ENCODE measurements at regions of chr21 and their contacts with region 1.

Region 1: GRCh38 chr21:17903029-17903806 is 84.1 kb upstream of the C21orf91 start:
- DNase-seq: no peak
- H3K4me3 ChIP-seq: no peak overlapping the region
- H3K27ac ChIP-seq: no peak overlapping the region
- H3K4me1 ChIP-seq: peaks cover 0 to 8% (median 2%) of the 10 kb centered on the region in 4 donors
- H3K27me3 ChIP-seq: no peaks in the 10 kb centered on the region
- CTCF ChIP-seq: peak; percentile 27

Region 2: GRCh38 chr21:17414766-17415165 is 488.5 kb before region 1 on chr21:
- intact Hi-C with region 1: no loop called
- DNase-seq: no peak
- H3K4me3 ChIP-seq: no peak overlapping the region
- H3K27ac ChIP-seq: no peak overlapping the region
- H3K4me1 ChIP-seq: no peaks in the 10 kb centered on the region
- H3K27me3 ChIP-seq: no peaks in the 10 kb centered on the region
- CTCF ChIP-seq: no peak

Region 3: DNA sequence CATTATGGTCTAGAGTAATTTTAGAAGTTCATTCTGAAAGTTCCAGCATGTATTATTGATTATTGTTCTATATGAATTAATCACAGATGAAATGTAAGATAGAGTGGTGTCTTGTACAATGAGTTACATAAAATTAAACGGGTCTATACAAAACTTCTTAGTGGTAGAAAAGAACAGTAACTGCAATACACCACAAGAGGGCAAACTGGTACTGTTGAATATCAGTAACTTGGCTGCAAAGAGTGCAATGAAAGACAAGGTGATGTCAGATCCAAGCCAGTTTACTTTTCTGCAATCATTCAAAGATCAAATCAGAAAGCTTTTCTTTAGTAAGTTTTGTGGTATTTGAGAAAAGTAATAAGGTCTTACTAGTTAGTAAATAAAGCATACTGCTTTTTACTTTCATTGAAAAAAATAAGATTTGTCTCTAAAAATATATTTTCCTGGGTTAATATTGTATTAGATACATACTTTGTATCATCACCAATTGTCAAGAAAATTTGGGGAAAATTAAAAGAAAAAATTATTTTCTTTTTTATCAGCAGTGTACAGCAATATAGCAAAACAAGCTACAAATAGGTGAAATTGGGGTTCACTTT is 224.1 kb before region 1 on chr21:
- intact Hi-C with region 1: loop called (anchors 5 kb)
- DNase-seq: no peak
- H3K4me3 ChIP-seq: no peak overlapping the region
- H3K27ac ChIP-seq: no peak overlapping the region
- H3K4me1 ChIP-seq: no peaks in the 10 kb centered on the region
- H3K27me3 ChIP-seq: no peaks in the 10 kb centered on the region
- CTCF ChIP-seq: peak; percentile 80 to 90

Region 4: GRCh38 chr21:18917622-18918021 is 1014.4 kb after region 1 on chr21:
- intact Hi-C with region 1: loop called (anchors 5 kb)
- DNase-seq: no peak
- H3K4me3 ChIP-seq: no peak overlapping the region
- H3K27ac ChIP-seq: no peak overlapping the region
- H3K4me1 ChIP-seq: no peaks in the 10 kb centered on the region
- H3K27me3 ChIP-seq: no peaks in the 10 kb centered on the region
- CTCF ChIP-seq: no peak